ENCODE measurements at regions of chr2 and their contacts with region 1.

Region 1: DNA sequence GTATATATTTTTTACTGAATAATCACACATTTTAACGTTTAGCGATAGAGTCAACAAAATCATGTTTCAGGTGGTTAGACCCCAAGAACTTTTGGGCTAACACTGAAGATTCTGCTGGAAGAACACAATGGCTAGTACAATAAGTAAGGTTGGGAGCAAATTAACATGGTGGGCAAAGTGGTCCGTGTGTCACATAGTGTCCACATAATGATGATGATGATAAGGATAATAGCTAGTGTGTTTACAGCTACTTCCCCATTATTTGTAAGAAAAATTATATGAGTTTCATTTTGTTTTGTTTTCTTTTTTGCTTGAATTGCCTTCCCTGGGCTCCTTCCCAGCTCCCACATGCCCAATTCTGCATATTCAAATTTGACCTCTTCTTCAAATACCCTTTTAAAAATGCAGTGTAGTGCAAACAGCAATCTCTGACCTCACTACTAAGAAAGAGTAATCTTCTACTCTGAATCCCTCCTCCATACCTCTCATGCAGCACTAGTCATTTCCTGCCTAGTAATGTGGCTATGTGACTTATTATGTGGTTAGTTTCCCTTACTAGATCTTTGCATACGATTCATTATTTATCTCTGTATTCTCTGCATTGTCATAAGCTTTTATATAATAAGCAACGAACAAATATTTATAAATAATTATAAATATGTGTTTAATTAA is 16.9 kb upstream of the VPS54 start:
- DNase-seq: no peak
- H3K4me3 ChIP-seq: no peak overlapping the region
- H3K27ac ChIP-seq: no peak overlapping the region
- H3K4me1 ChIP-seq: no peaks in the 10 kb centered on the region; the same call in 1 of the 2 replicates
- H3K27me3 ChIP-seq: no peaks in the 10 kb centered on the region
- CTCF ChIP-seq: no peak

Region 2: DNA sequence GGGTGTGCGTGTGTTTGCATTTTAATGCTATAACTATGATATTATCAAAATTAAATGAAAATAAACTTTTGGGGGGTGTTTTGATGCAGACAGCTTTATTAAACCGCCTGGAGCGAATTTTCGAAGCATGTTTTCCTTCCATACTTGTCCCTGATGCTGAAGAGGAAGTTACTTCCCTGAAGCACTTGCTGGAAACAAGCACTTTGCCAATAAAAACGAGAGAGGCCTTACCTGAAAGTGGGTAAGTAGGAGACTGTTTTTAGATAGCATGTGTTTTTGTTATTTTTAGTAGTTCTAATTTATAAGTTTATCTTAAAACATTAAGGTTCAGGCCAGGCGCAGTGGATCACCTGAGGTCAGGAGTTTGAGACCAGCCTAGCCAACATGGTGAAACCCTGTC is 531.3 kb after region 1 on chr2:
- CTCF ChIA-PET with region 1: no interaction called
- POLR2A ChIA-PET with region 1: interaction called, 10 read pairs
- intact Hi-C with region 1: no loop called
- DNase-seq: no peak
- H3K4me3 ChIP-seq: no peak overlapping the region
- H3K27ac ChIP-seq: no peak overlapping the region
- H3K4me1 ChIP-seq: no peaks in the 10 kb centered on the region
- H3K27me3 ChIP-seq: no peaks in the 10 kb centered on the region
- CTCF ChIP-seq: no peak

Region 3: GRCh38 chr2:64784168-64785073 is 748.3 kb after region 1 on chr2:
- CTCF ChIA-PET with region 1: no interaction called
- POLR2A ChIA-PET with region 1: interaction called, 13 read pairs
- intact Hi-C with region 1: no loop called
- DNase-seq: peak; percentile 90 to 95
- H3K4me3 ChIP-seq: peak overlapping the region; percentile 33; the same call in 1 of the 2 replicates
- H3K27ac ChIP-seq: peak overlapping the region; percentile 93
- H3K4me1 ChIP-seq: peaks cover 96% of the 10 kb centered on the region
- H3K27me3 ChIP-seq: no peaks in the 10 kb centered on the region
- CTCF ChIP-seq: no peak